Heart right ventricle (tissue), 16 donors: ENCODE measurements at regions of chr18 and their contacts with region 1.

Region 1: DNA sequence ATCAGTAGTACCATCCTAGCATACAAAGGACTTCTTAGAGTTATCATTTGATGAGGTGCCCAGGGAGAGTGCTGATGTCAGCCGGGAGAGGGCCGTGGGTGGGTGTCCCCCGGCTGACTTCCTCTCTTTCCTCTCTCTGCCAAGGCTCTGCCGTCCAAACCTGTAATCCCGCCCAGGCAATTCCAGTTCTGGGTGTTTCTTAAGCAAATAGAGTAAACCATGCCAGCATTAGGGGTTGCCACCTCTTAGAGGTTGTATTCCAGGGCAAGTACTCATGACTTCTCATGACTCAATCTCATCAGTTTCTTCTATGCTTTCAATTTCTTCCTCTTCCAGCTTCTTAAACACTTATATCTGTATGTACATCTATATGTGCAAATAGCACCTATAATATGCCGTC is 117.2 kb downstream of the GATA6 start:
- DNase-seq: no peak
- ATAC-seq: peak; percentile 31 to 68 (median 56)
- H3K4me3 ChIP-seq: peak overlapping the region in 1 of 10 donors; percentile 14
- H3K27ac ChIP-seq: peak overlapping the region in 5 of 10 donors; percentile 1 to 33 (median 2)
- H3K4me1 ChIP-seq: peaks cover 0 to 41% (median 9%) of the 10 kb centered on the region in 9 donors
- H3K27me3 ChIP-seq: no peaks in the 10 kb centered on the region
- CTCF ChIP-seq: no peak

Region 2: DNA sequence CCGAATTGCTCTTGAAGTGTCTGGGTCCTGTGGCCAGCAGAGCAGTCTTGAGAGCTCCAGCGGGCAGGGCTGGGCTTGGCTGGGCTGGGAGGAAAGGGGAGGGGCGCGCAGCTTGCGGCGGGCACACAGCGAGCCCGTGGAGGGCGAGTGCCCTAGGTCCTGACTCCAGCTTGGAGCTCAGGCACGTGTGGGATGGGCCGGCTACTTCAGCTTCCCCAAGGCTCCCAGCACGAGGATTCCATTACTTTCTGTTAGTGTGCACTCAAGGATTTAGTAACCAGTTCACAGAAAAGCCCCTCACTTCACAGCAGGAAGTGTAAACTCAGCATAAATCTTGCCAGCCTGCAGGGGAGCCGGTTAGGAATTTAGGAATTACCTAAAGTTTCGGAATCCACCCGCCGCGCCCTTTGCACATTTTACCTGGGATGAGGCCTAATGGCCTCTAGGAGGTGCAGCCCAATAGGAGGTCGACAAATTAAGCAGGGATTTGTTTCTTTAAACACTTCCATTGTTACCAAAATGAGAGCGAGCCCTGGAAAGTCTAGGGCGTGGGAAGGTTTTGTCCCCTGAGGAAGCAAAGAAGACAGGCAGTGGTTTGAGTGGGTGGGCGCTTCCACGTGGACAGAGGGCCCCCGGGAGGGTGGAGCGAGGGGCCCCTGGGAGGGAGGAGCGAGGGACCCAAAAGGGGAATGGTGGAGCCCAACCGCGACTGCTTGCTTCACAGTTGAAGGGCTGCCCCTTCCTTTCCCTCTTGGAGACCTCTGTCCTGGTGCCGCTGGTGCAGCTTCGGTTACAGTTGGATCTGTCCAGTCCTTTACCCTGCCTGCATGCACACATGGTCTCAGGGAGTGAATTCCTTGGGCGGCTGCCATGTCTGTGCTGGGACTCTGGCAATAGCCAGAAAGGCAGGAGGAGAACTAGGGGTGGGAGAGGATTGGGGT is 37.8 kb after region 1 on chr18:
- intact Hi-C with region 1: loop called in 1 of 10 experiments (anchors 5 kb)
- DNase-seq: peak; percentile 74 to 78
- ATAC-seq: peak; percentile 78 to 93 (median 86)
- H3K4me3 ChIP-seq: peak overlapping the region in 9 of 10 donors; percentile 4 to 45 (median 33)
- H3K27ac ChIP-seq: peak overlapping the region; percentile 30 to 82 (median 68)
- H3K4me1 ChIP-seq: peaks cover 6 to 37% (median 19%) of the 10 kb centered on the region in 9 donors
- H3K27me3 ChIP-seq: no peaks in the 10 kb centered on the region
- CTCF ChIP-seq: peak; percentile 10 to 58 (median 37)

Region 3: GRCh38 chr18:22332590-22332989 is 46.0 kb after region 1 on chr18:
- intact Hi-C with region 1: loop called in 2 of 10 experiments (anchors 5 kb)
- DNase-seq: no peak
- ATAC-seq: no peak
- H3K4me3 ChIP-seq: no peak overlapping the region
- H3K27ac ChIP-seq: no peak overlapping the region
- H3K4me1 ChIP-seq: peaks cover 2 to 27% (median 17%) of the 10 kb centered on the region in 9 donors
- H3K27me3 ChIP-seq: no peaks in the 10 kb centered on the region
- CTCF ChIP-seq: no peak